ENCODE measurements at regions of chr10 and their contacts with region 1.

Region 1: GRCh38 chr10:101095542-101096213 is 33.9 kb downstream of the KAZALD1 start:
- DNase-seq: peak; percentile 73 to 84 (median 82)
- ATAC-seq: peak; percentile 88
- H3K4me3 ChIP-seq: no peak overlapping the region
- H3K27ac ChIP-seq: no peak overlapping the region
- H3K4me1 ChIP-seq: no peaks in the 10 kb centered on the region
- H3K27me3 ChIP-seq: no peaks in the 10 kb centered on the region
- CTCF ChIP-seq: peak; percentile 58 to 89 (median 77)
- POLR2A ChIP-seq: no peak

Region 2: DNA sequence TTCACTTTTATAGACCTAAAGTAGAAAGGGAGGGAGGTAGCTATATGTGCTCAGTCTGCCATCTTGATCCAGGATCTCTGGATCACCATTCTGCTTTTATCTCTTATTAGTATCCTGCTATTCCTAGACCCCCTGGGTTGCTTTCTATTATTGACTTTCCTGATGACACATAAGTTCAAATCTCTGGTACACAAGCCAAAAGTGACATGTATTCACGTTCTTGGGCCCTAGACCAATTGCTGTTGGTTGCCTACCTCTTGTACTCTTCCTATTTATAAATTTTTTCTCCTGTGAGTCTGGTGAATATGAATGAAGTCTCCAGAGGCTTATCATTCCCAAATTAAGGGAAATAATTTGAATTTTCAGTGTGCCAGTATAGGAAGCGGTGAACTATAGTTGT is 1142.9 kb before region 1 on chr10:
- intact Hi-C with region 1: no loop called
- DNase-seq: no peak
- ATAC-seq: no peak
- H3K4me3 ChIP-seq: no peak overlapping the region
- H3K27ac ChIP-seq: no peak overlapping the region
- H3K4me1 ChIP-seq: no peaks in the 10 kb centered on the region
- H3K27me3 ChIP-seq: no peaks in the 10 kb centered on the region
- CTCF ChIP-seq: no peak
- POLR2A ChIP-seq: no peak

Region 3: DNA sequence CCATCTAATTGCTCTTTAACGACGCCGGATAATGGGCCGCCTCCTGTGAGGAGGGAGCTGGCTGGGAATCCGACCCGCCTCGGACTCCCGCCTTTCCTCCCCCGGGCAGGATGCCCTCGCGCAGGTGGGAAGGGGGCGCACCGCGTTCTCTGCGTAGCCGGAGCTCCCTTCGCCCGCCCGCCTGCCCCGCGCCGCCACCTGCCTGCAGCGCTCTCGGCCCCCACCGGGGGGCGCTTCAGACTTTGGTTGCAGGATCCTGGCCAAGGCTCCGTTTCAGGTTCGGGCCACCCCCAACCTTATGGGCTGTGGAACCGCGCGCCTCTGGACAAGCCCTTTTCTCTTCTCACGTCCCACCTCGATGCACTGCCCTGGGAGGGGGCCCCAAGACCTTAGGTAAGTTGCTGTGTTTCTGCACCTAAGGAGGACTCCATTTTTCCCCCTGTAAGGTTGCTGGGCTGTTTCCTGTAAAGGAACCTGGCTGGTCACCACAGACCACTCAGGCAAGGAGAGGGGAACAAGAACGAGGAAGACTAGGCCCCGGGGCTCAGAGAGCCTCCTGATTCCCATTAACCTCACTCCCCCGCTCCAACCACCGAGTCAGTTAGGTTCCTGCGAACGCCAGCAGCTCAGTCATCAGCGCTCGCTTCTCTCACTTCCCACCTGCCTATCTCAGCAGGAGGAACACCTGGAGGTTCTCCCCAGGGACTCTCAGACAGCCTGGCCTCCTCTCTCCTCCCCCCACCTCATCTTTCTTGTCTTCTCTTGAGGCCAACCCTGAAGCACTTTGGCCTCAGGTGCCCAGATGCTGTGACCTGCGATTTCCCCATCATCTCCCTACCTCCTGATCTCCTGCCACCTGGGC is 45.2 kb before region 1 on chr10:
- intact Hi-C with region 1: no loop called
- DNase-seq: peak; percentile 73 to 82 (median 77)
- ATAC-seq: peak; percentile 93
- H3K4me3 ChIP-seq: no peak overlapping the region
- H3K27ac ChIP-seq: no peak overlapping the region
- H3K4me1 ChIP-seq: peaks cover 21% of the 10 kb centered on the region
- H3K27me3 ChIP-seq: peaks cover 0 to 21% of the 10 kb centered on the region in 2 donors
- CTCF ChIP-seq: peak; percentile 66 to 96 (median 79)
- POLR2A ChIP-seq: peak in 1 of 3 donors; percentile 19

Region 4: DNA sequence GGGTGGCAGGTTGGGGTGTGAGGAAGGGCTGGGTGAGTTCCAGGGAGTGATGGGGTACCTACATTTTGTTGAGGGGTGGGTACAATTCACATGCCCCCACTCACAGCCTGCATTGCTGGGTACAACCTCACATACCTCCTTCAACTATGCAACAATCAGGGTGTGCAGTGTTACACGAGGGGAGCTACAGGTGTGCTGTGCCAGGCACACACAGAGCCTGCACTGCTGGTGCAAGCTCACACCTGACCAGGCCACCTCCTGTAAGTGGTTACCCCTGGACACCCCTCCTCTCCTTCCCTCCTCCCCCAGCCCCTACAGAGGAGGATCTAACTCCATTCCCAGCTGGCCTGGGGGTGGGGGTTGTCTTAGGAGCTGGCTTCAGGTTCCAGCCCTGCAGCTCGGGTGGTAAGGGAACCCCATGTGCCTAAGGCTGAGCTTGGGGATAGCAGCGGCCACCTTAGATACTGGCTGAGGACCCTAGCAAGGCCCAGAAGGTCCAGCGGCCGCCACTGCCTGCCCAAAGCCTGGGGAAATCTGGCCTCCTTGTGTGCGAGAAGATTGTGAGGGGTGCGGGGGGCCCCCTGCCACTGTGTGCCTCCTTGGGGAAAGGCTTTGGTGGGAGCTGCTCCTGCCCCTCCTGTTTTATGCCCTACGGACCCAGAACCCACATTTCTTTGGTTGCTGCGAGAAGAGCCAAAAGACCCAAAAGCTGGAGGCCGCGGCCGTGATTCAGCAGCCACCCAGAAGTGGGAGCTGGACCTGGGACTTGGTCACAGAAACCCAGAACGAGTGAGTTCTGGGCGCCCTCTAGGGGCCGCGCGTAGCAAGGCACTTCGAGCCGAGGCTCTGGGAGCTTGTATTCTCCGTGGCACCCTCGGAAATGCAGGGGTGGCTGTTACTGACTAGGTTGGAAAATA is 46.2 kb after region 1 on chr10:
- intact Hi-C with region 1: loop called (anchors 5 kb)
- DNase-seq: peak; percentile 84 to 86 (median 84)
- ATAC-seq: peak; percentile 87
- H3K4me3 ChIP-seq: no peak overlapping the region
- H3K27ac ChIP-seq: no peak overlapping the region
- H3K4me1 ChIP-seq: peaks cover 21% of the 10 kb centered on the region
- H3K27me3 ChIP-seq: peaks cover 0 to 58% of the 10 kb centered on the region in 2 donors
- CTCF ChIP-seq: peak; percentile 91 to 98 (median 95)
- POLR2A ChIP-seq: no peak